Tibial artery (tissue), 4 donors: ENCODE measurements at regions of chr20 and their contacts with region 1.

Region 1: GRCh38 chr20:4592316-4593148 is 129.2 kb upstream of the PRND start:
- DNase-seq: no peak
- H3K4me3 ChIP-seq: peak overlapping the region; percentile 24 to 42
- H3K27ac ChIP-seq: no peak overlapping the region
- H3K4me1 ChIP-seq: peaks cover 0 to 13% (median 11%) of the 10 kb centered on the region in 4 donors
- H3K27me3 ChIP-seq: peaks cover 0 to 5% of the 10 kb centered on the region in 2 donors
- CTCF ChIP-seq: peak; percentile 91 to 97

Region 2: DNA sequence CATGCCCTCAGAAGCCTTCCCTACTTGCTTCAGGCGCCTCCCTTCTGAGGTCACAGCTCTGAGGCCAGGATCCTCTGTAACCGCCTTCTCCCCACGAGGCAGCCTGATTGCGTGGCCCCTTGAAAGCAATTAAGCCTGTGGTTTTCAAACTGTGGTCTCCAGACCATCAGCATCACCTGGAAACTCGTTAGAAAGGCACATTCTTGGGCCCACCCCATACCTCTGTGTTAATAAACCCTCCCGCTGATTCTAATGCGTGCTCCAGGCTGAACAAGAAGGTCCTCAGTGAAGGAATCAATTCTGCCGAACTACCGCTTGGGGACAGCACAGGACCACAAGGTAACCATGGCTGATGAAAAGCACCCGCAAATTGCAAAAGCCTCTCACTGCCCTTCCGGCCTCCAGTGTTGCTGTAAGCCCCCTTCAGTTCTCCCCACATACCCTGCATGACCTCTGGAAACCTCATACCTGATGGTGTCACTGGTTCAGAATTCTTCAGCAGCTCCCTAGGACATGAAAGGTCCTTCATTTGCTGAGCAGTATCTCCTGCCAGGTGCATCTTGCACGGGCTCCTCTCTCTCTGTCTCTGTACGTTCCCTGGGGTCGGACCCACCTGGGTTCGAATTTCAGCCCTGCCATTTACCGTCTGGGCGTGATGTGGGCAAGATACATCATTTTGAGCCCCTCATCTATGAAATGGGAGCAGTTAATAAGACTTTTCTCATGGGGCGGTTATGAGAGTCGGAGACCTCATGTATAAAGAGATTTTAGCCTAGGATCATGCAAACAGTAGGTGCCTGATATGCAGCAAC is 483.8 kb before region 1 on chr20:
- intact Hi-C with region 1: loop called (anchors 10 kb)
- DNase-seq: peak; percentile 54 to 74
- H3K4me3 ChIP-seq: no peak overlapping the region
- H3K27ac ChIP-seq: no peak overlapping the region
- H3K4me1 ChIP-seq: peaks cover 0 to 7% (median 0%) of the 10 kb centered on the region in 4 donors
- H3K27me3 ChIP-seq: peaks cover 0 to 9% of the 10 kb centered on the region in 2 donors
- CTCF ChIP-seq: peak; percentile 96 to 97